Activated CD4-positive, alpha-beta T cell treated with anti-CD3 and anti-CD28 coated beads for 36 hours (primary cell): ENCODE measurements at regions of chr1 and their contacts with region 1.

Region 1: DNA sequence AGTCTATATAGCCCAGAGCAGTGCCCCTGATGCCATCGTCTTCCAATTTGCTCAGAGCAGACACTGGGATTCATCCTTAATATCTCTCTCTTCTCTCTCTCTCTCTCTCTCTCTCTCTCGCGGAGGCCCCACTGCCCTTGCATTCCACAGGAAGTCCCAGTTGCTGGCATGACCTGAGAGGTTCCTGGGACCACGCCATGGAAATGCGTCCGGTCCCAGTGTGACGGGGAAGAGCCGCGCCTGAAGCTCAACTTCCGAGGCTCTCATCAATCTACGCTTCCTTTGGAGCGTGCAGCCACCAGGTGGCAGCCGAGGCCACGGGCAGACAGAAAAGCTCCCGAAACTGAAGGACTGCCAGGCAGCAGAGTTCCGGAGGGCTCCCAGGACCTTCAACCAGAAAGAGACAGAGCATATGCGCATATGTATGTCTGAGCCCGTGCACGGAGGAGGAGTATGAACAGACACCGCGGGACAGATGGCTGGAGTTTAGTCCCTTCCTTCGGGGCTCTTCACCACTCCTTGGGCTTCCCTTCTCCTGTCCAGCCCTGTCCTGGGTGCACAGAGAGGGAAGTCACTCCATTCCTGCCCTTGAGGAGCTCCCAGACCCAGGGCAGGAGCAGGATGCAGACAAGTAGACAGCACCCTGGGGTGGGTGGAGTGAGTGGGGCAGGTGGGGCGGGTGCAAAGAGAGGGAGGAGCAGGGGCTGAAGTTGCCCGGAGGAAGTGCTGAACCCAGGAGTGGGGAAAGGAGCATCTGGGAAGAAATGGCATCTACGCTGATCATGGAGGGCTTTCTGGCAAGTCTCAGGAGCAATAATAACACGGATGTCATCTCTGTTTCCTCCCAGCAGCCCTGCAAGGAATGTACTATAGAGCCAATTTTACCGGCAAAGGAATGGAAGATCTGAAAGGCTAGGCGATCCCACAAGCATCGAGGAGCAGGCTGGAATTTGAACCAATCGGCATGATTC is 10.5 kb downstream of the PDZK1IP1 start:
- DNase-seq: peak; percentile 91
- ATAC-seq: peak; percentile 90
- H3K4me3 Mint-ChIP-seq: peak overlapping the region; percentile 57
- H3K27ac Mint-ChIP-seq: no peak overlapping the region
- H3K4me1 Mint-ChIP-seq: peaks cover 8% of the 10 kb centered on the region
- H3K27me3 Mint-ChIP-seq: peaks cover 22% of the 10 kb centered on the region

Region 2: GRCh38 chr1:47262787-47263413 is 83.6 kb after region 1 on chr1:
- CTCF ChIA-PET with region 1: interaction called, 47 read pairs
- POLR2A ChIA-PET with region 1: interaction called, 4 read pairs
- intact Hi-C with region 1: loop called in 1 of 2 experiments (anchors 5 kb)
- DNase-seq: peak; percentile 56
- ATAC-seq: no peak
- H3K4me3 Mint-ChIP-seq: no peak overlapping the region
- H3K27ac Mint-ChIP-seq: no peak overlapping the region
- H3K4me1 Mint-ChIP-seq: no peaks in the 10 kb centered on the region
- H3K27me3 Mint-ChIP-seq: no peaks in the 10 kb centered on the region